Motor neuron (in vitro differentiated cells): ENCODE measurements at regions of chr18 and their contacts with region 1.

Region 1: GRCh38 chr18:34773961-34774766 is 64.1 kb downstream of the DTNA start:
- ATAC-seq: peak in 6 of 8 experiments; percentile 22 to 94 (median 58)
- H3K4me3 ChIP-seq: no peak overlapping the region
- H3K27ac ChIP-seq: no peak overlapping the region
- H3K4me1 ChIP-seq: no peaks in the 10 kb centered on the region

Region 2: DNA sequence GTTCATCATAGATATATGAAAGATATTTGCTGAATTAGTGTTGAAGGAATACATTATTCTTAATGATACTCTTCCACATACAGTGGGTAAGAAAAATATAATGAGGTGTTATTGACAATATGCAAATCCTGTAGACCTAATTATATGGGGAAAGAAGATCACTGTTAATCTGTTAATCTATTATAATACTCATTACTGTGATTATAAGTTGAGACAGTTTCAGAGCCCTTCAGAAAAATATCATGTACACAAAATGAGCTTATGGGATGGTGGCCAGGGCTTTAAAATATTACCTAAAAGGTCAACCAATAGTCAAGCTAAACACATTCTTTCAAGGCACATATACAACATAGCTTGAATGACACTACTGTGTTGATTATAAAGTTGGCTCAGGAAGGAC is 712.9 kb before region 1 on chr18:
- in situ Hi-C with region 1: no loop called
- ATAC-seq: no peak
- H3K4me3 ChIP-seq: no peak overlapping the region
- H3K27ac ChIP-seq: no peak overlapping the region
- H3K4me1 ChIP-seq: peaks cover 0 to 3% of the 10 kb centered on the region in 2 donors

Region 3: GRCh38 chr18:34661464-34662111 is 112.6 kb before region 1 on chr18:
- in situ Hi-C with region 1: loop called in 4 of 9 experiments (anchors 10 to 25 kb)
- ATAC-seq: peak; percentile 43 to 77 (median 66)
- H3K4me3 ChIP-seq: no peak overlapping the region
- H3K27ac ChIP-seq: no peak overlapping the region
- H3K4me1 ChIP-seq: peaks cover 14 to 22% of the 10 kb centered on the region in 2 donors

Region 4: DNA sequence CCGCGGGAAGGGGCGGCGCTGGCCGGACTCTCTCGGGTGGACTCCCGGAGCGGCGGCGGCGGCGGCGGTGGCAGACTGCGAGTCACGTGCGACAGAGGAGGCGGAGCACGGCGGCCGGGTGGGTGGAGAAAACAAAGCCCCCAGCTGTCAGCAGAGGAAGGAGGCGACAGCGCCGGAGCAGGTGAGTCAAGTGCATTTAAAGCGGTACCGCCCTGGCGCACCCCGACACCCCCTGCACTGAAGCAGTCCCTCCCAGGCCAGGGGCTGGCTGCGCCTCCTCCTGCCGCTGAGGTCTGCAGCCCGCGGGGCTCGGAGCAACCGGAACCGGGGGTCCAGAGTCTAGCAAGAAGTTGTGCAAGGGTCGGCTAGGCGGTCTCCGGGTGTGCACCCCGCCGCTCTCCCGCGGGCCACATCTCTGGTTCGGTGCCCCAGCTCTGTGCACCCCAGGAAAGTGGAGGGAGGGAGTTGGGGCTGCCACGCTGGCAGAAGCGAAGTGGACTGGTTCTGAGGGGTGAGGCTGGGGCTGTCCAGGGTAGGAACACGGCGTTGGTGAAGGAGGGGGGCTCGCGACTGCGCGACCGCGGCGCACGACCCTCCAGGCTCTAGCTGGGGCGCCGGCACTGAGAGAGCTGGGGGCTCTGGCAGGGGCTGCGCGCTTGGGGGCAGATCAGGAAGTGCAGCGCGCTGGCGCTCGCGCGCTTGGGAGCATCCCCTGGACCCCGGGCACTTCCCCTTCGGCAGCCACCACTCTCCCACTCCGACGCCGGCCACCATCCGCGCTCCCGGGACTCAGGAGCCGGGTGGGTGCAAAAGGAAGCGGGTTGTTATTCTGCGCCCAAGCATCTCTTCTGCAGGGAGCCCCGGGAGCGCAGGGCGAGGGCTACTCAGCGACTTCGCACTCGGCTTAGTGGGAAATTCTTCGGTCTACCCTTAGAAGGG is 203.0 kb after region 1 on chr18:
- in situ Hi-C with region 1: no loop called
- ATAC-seq: peak; percentile 7 to 75 (median 65)
- H3K4me3 ChIP-seq: peak overlapping the region; percentile 54 to 85 (median 80)
- H3K27ac ChIP-seq: peak overlapping the region; percentile 39 to 56
- H3K4me1 ChIP-seq: peaks cover 0 to 9% of the 10 kb centered on the region in 2 donors